ENCODE measurements at regions of chrX and their contacts with region 1.

Region 1: GRCh38 chrX:107025545-107025944 is 25.5 kb upstream of the MORC4 start:
- DNase-seq: peak; percentile 19 to 38 (median 22)
- ATAC-seq: peak; percentile 77; the same call in 2 of the 3 replicates
- H3K4me3 ChIP-seq: no peak overlapping the region
- H3K27ac ChIP-seq: no peak overlapping the region
- H3K4me1 ChIP-seq: no peaks in the 10 kb centered on the region; a peak in 1 of 5 replicates
- H3K27me3 ChIP-seq: no peaks in the 10 kb centered on the region
- CTCF ChIP-seq: peak; percentile 53 to 78 (median 62)
- EP300 ChIP-seq: no peak
- POLR2A ChIP-seq: no peak
- RAD21 ChIP-seq: peak; percentile 84 to 91

Region 2: GRCh38 chrX:106987488-106987887 is 38.1 kb before region 1 on chrX:
- CTCF ChIA-PET with region 1: no interaction called
- POLR2A ChIA-PET with region 1: no interaction called
- in situ Hi-C with region 1: no loop called
- intact Hi-C with region 1: no loop called
- DNase-seq: no peak
- ATAC-seq: no peak
- H3K4me3 ChIP-seq: no peak overlapping the region
- H3K27ac ChIP-seq: no peak overlapping the region
- H3K4me1 ChIP-seq: no peaks in the 10 kb centered on the region
- H3K27me3 ChIP-seq: no peaks in the 10 kb centered on the region
- CTCF ChIP-seq: no peak
- EP300 ChIP-seq: no peak
- POLR2A ChIP-seq: no peak
- RAD21 ChIP-seq: no peak

Region 3: GRCh38 chrX:107290019-107290418 is 264.5 kb after region 1 on chrX:
- CTCF ChIA-PET with region 1: no interaction called
- POLR2A ChIA-PET with region 1: no interaction called
- in situ Hi-C with region 1: no loop called
- intact Hi-C with region 1: loop called (anchors 1 kb)
- DNase-seq: peak in 1 of 4 experiments; percentile 8
- ATAC-seq: peak; percentile 55; the same call in 2 of the 3 replicates
- H3K4me3 ChIP-seq: no peak overlapping the region
- H3K27ac ChIP-seq: no peak overlapping the region
- H3K4me1 ChIP-seq: no peaks in the 10 kb centered on the region
- H3K27me3 ChIP-seq: no peaks in the 10 kb centered on the region
- CTCF ChIP-seq: peak in 1 of 3 experiments; percentile 45; a peak in 2 of 6 replicates
- EP300 ChIP-seq: no peak
- POLR2A ChIP-seq: no peak
- RAD21 ChIP-seq: peak in 1 of 2 experiments; percentile 58; a peak in 2 of 4 replicates

Region 4: GRCh38 chrX:107324499-107325320 is 299.2 kb after region 1 on chrX:
- CTCF ChIA-PET with region 1: no interaction called
- POLR2A ChIA-PET with region 1: no interaction called
- in situ Hi-C with region 1: no loop called
- intact Hi-C with region 1: loop called (anchors 2 kb)
- DNase-seq: peak; percentile 9 to 44 (median 27)
- ATAC-seq: peak; percentile 83
- H3K4me3 ChIP-seq: no peak overlapping the region
- H3K27ac ChIP-seq: no peak overlapping the region
- H3K4me1 ChIP-seq: peaks cover 0 to 13% of the 10 kb centered on the region in 2 experiments; a peak in 2 of 5 replicates
- H3K27me3 ChIP-seq: no peaks in the 10 kb centered on the region
- CTCF ChIP-seq: peak; percentile 43 to 57 (median 52)
- EP300 ChIP-seq: no peak
- POLR2A ChIP-seq: no peak
- RAD21 ChIP-seq: peak in 1 of 2 experiments; percentile 67; a peak in 3 of 4 replicates

Region 5: DNA sequence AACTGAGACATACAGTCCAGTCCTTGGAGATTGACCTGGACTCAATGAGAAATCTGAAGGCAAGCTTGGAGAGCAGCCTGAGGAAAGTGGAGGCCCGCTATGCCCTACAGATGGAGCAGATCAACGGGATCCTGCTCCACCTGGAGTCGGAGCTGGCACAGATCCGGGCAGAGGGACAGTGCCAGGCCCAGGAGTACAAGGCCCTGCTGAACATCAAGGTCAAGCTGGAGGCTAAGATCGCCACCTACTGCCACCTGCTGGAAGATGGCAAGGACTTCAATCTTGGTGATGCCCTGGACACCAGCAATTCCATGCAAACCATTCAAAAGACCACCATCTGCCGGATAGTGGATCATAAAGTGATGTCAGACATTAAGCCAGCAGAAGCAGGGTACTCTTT is 403.5 kb after region 1 on chrX:
- CTCF ChIA-PET with region 1: no interaction called
- POLR2A ChIA-PET with region 1: no interaction called
- in situ Hi-C with region 1: no loop called
- intact Hi-C with region 1: loop called (anchors 2 kb)
- DNase-seq: peak in 1 of 4 experiments; percentile 49
- ATAC-seq: no peak
- H3K4me3 ChIP-seq: no peak overlapping the region
- H3K27ac ChIP-seq: no peak overlapping the region
- H3K4me1 ChIP-seq: no peaks in the 10 kb centered on the region
- H3K27me3 ChIP-seq: no peaks in the 10 kb centered on the region
- CTCF ChIP-seq: peak; percentile 32 to 48 (median 43)
- EP300 ChIP-seq: no peak
- POLR2A ChIP-seq: no peak
- RAD21 ChIP-seq: peak in 1 of 2 experiments; percentile 35; a peak in 1 of 4 replicates

Region 6: DNA sequence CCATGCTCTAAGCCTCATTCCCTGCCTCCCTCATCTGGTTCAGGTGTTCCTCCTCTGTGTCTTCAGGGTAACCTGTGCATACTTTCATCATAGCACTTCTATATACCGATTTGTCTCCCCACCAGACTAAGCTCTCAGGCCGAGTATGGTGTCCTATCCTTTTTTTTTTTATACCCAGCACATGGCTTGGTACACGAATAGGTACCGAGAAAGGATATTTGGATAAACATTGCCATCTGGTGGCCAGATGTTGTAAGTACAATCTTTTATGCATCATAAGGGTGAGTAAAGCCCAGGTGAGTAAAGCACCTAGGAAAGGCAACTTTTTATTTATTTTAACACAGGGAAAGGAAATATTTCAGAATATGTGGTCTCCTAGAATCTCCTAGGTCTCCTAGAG is 868.5 kb after region 1 on chrX:
- CTCF ChIA-PET with region 1: interaction called, 3 read pairs
- POLR2A ChIA-PET with region 1: no interaction called
- in situ Hi-C with region 1: no loop called
- intact Hi-C with region 1: loop called (anchors 5 kb)
- DNase-seq: peak; percentile 36 to 50 (median 44)
- ATAC-seq: peak; percentile 84
- H3K4me3 ChIP-seq: no peak overlapping the region
- H3K27ac ChIP-seq: no peak overlapping the region
- H3K4me1 ChIP-seq: no peaks in the 10 kb centered on the region
- H3K27me3 ChIP-seq: no peaks in the 10 kb centered on the region
- CTCF ChIP-seq: peak; percentile 44 to 50 (median 46); a peak in 4 of 6 replicates
- EP300 ChIP-seq: no peak
- POLR2A ChIP-seq: no peak
- RAD21 ChIP-seq: peak; percentile 65 to 79